ENCODE measurements at regions of chr11 and their contacts with region 1.

Region 1: DNA sequence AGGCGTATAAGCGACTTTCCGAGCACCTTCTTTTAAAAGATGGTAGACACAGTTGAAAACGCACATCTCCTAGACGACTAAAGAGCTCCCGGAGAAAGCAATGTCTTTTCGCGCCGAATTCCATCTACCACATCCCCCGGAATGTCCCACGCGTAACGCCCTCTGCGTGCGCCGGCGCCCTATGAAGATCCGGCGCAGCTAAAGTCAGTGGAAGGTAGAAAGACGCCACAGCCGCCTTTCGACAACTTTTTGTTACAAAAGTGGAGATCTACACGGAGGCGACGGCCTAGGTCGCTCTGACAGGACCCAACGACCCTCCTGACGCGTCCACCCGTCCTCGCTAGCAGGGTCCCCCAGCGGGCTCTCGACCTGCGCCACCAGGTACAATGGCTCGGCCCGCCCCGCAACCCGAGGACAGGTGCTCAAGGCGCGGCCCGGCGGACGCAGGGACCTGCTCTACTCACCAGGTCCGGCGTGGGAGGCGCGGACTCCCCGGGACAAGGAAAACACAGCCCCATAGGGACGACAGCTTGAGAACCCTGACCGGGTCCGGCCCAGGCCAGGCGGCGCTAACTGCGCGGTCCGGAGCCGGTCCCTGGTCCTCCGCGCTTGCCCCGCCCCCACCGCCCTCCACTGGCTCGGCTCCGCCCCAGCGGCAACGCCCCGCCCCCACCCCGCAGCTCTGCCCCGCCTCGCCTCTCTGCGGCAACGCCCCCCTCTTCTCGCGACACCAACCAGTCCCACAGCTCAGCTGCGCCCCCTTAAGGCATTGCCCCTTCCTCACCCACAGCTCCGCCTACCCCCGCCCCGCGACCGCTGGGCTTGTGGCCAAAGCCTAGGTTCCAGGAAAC is at the start of gene SVIP:
- DNase-seq: peak; percentile 95
- H3K4me3 Mint-ChIP-seq: peak within 1 kb of the TSS; percentile 85
- H3K27ac Mint-ChIP-seq: peak within 1 kb of the TSS; percentile 86
- H3K4me1 Mint-ChIP-seq: peaks cover 13% of the 10 kb centered on the region
- H3K27me3 Mint-ChIP-seq: no peaks in the 10 kb centered on the region
- total RNA-seq, gene SVIP: 64.3 to 65.6 TPM

Region 2: GRCh38 chr11:22337596-22338485 is 491.6 kb before region 1 on chr11 and contains the start of gene SLC17A6:
- CTCF ChIA-PET with region 1: interaction called, 3 read pairs
- POLR2A ChIA-PET with region 1: no interaction called
- intact Hi-C with region 1: loop called (anchors 2 kb)
- DNase-seq: peak; percentile 18
- H3K4me3 Mint-ChIP-seq: no peak within 1 kb of the TSS
- H3K27ac Mint-ChIP-seq: no peak within 1 kb of the TSS
- H3K4me1 Mint-ChIP-seq: peaks cover 12% of the 10 kb centered on the region
- H3K27me3 Mint-ChIP-seq: peaks cover 54% of the 10 kb centered on the region
- total RNA-seq, gene SLC17A6: not detected

Region 3: DNA sequence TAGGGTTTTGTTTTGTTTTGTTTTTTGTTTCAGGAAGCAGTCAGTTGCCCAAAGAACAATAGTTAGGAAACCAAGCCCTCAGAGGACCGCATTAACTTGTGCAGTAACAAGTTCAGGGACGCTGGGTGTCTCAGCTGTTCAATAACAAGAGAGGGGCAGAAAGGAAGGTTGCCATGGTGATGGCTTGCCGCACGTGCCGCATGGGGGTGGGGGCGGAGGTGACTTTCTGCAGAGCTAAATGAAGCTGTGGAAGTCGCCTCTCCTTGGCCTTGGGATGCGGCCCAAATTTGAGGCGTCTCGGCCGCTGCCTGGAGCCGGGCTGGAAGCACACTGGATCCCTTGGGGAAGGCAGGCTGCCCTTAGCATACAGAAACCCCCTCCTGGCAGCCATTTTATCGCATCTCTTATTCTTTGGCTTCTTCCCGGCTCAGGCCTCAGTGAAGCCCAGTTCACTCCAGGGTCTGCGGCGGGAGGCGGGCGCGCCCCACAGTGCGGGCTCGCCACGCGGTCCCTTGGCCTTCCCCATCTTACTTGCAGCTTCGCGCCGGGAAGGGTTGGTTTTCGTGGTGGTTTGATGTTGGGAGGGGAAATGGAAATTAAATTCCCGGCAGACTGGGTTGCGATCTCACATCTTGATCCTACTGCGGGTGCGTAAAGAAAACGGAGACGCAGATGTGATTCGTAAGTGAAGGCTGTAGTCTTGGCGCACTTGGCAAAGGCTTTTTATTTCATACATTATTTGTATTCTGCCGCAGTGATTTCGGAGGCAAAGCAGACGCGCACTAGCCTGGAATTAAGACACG is 397.0 kb before region 1 on chr11:
- CTCF ChIA-PET with region 1: no interaction called
- POLR2A ChIA-PET with region 1: no interaction called
- intact Hi-C with region 1: no loop called
- DNase-seq: peak; percentile 18
- H3K4me3 Mint-ChIP-seq: peak overlapping the region; percentile 31
- H3K27ac Mint-ChIP-seq: no peak overlapping the region
- H3K4me1 Mint-ChIP-seq: peaks cover 13% of the 10 kb centered on the region
- H3K27me3 Mint-ChIP-seq: peaks cover 25% of the 10 kb centered on the region

Region 4: GRCh38 chr11:22625448-22626287 is 203.8 kb before region 1 on chr11 and contains the start of gene FANCF:
- CTCF ChIA-PET with region 1: interaction called, 13 read pairs
- POLR2A ChIA-PET with region 1: interaction called, 5 read pairs
- intact Hi-C with region 1: loop called (anchors 1 kb)
- DNase-seq: peak; percentile 95
- H3K4me3 Mint-ChIP-seq: peak within 1 kb of the TSS; percentile 97
- H3K27ac Mint-ChIP-seq: peak within 1 kb of the TSS; percentile 96
- H3K4me1 Mint-ChIP-seq: peaks cover 31% of the 10 kb centered on the region
- H3K27me3 Mint-ChIP-seq: no peaks in the 10 kb centered on the region
- total RNA-seq, gene FANCF: 10.5 to 11.1 TPM

Region 5: GRCh38 chr11:22787551-22788162 is 41.8 kb before region 1 on chr11:
- CTCF ChIA-PET with region 1: interaction called, 21 read pairs
- POLR2A ChIA-PET with region 1: no interaction called
- intact Hi-C with region 1: no loop called
- DNase-seq: peak; percentile 22
- H3K4me3 Mint-ChIP-seq: no peak overlapping the region
- H3K27ac Mint-ChIP-seq: no peak overlapping the region
- H3K4me1 Mint-ChIP-seq: no peaks in the 10 kb centered on the region
- H3K27me3 Mint-ChIP-seq: no peaks in the 10 kb centered on the region

Region 6: DNA sequence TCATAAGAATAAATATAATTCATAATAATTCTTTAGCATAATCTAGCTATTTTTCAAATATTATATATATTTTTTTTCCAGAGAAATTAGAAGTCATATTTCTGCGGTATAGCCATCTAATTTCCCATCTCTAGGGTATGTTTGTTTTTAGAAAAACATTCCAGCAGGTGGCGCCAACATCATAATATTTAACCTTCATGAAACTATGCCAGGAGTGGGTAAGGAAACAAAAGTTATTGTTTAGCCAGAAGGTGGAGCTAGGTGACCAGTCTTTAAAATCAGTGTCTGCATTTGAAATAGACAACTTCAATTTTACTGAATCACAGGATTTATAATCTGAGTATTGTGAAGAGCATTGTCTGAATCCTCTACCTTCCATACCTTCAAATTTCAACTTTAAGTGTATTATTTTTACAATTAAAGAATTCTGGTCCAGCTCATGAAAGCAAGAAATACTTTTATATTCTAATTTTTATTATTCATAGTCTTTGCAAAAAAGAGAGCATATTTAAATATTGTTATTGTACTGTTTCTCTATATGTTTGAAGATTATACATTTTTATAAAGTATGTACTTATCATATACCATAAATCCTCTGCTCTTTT is 46.5 kb after region 1 on chr11:
- CTCF ChIA-PET with region 1: interaction called, 16 read pairs
- POLR2A ChIA-PET with region 1: no interaction called
- intact Hi-C with region 1: no loop called
- DNase-seq: peak; percentile 58
- H3K4me3 Mint-ChIP-seq: no peak overlapping the region
- H3K27ac Mint-ChIP-seq: no peak overlapping the region
- H3K4me1 Mint-ChIP-seq: no peaks in the 10 kb centered on the region
- H3K27me3 Mint-ChIP-seq: no peaks in the 10 kb centered on the region

Measured in activated CD4-positive, alpha-beta memory T cell treated with anti-CD3 and anti-CD28 coated beads for 36 hours (primary cell).